ENCODE measurements at regions of chr10 and their contacts with region 1.

Region 1: GRCh38 chr10:22615819-22616499 is 98.4 kb downstream of the PIP4K2A start:
- DNase-seq: no peak
- ATAC-seq: peak; percentile 20
- H3K4me3 Mint-ChIP-seq: peak overlapping the region; percentile 67
- H3K27ac Mint-ChIP-seq: peak overlapping the region; percentile 70
- H3K4me1 Mint-ChIP-seq: peaks cover 96% of the 10 kb centered on the region
- H3K27me3 Mint-ChIP-seq: no peaks in the 10 kb centered on the region

Region 2: GRCh38 chr10:22597138-22597537 is 18.8 kb before region 1 on chr10:
- CTCF ChIA-PET with region 1: interaction called, 20 read pairs
- POLR2A ChIA-PET with region 1: interaction called, 6 read pairs
- DNase-seq: peak; percentile 46
- ATAC-seq: peak; percentile 55
- H3K4me3 Mint-ChIP-seq: no peak overlapping the region
- H3K27ac Mint-ChIP-seq: peak overlapping the region; percentile 72
- H3K4me1 Mint-ChIP-seq: peaks cover 74% of the 10 kb centered on the region
- H3K27me3 Mint-ChIP-seq: no peaks in the 10 kb centered on the region

Region 3: GRCh38 chr10:22630234-22631174 is 14.5 kb after region 1 on chr10:
- CTCF ChIA-PET with region 1: interaction called, 32 read pairs
- POLR2A ChIA-PET with region 1: interaction called, 10 read pairs
- DNase-seq: peak; percentile 56
- ATAC-seq: peak; percentile 87
- H3K4me3 Mint-ChIP-seq: peak overlapping the region; percentile 78
- H3K27ac Mint-ChIP-seq: peak overlapping the region; percentile 96
- H3K4me1 Mint-ChIP-seq: peaks cover 92% of the 10 kb centered on the region
- H3K27me3 Mint-ChIP-seq: no peaks in the 10 kb centered on the region

Region 4: DNA sequence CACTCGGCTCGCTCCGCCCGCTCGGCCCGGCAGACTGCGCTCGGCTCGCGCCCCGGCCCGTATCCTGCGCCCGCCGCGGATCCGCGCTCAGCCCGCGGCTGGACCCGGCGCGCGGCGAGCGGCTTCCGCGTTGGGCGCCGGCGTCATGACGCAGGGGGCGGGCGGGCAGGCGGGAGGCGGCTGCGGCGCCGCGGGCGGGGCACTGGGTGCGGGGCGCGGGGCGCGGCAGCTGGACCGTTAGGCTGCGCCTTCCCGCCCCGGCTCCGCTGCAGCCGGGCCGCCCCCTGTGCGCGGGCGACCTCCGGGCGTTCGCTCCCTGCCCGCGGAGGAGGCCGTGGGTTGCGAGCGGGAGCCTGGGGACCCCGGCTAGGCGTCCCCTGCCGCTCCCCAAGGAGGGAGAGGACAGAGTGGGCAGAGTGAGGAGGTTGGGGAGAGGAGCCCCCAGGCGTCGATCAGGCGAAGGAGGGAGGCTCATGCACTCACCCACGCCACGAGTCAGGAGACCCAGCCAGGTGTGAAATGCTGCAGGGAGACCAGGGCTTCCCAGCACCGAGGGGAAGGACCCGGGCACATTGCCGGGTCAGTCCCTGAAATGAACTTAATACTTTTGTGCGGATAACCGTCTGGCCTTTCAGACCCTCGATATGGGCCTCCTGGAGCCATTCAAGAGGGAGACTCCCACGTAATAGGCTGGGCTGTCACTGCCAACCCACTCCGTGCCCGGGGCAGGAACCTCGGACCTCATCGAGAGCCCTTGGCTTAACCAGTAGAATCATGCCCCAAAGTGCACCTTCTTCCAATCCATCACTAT is 98.7 kb after region 1 on chr10 and contains the start of gene PIP4K2A:
- CTCF ChIA-PET with region 1: interaction called, 17 read pairs
- POLR2A ChIA-PET with region 1: interaction called, 7 read pairs
- DNase-seq: peak; percentile 79
- ATAC-seq: peak; percentile 89
- H3K4me3 Mint-ChIP-seq: peak within 1 kb of the TSS; percentile 88
- H3K27ac Mint-ChIP-seq: peak within 1 kb of the TSS; percentile 86
- H3K4me1 Mint-ChIP-seq: peaks cover 33% of the 10 kb centered on the region
- H3K27me3 Mint-ChIP-seq: no peaks in the 10 kb centered on the region
- total RNA-seq, gene PIP4K2A: 154 to 164 TPM

Measured in activated CD8-positive, alpha-beta T cell treated with anti-CD3 and anti-CD28 coated beads, Interleukin-2, amount 10 ng/mL, durations not matched to agents 7 days and 5 days (primary cell).